RWPE1 (cell line): ENCODE measurements at regions of chr15 and their contacts with region 1.

Region 1: DNA sequence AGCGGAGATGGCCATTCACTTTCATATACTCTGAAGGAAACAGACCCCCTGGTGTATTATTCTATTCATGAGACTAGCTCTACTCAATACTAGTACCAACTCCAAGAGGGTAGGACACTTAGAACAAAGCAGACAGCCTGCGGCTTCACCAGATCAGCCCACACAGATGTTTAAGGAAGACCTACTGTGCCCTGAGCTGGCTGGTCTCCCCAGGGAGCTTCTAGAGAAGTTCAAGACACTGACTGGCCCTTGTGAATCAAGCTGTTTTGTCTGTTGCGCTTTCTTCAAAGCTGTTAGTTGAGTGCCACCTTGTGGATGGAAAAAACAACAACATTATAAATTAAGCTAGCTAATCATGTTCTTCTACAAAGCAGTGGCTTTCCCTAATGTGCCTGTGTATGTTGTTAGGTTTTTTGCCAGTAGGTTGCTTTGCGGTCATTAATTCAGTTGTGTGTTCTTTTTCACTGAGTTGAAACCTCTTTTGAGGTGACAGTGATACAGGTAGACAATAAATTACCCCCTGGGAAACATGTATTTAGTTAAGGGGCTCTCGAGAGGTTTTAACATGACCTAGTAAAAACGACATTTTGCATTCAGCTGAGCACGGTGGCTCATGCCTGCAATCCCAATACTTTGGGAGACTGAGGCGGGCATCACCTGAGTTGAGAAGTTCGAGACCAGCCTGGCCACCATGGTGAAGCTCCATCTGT is 64.2 kb upstream of the MYZAP start:
- DNase-seq: peak; percentile 70
- H3K27ac ChIP-seq: no peak overlapping the region
- CTCF ChIP-seq: peak; percentile 72

Region 2: DNA sequence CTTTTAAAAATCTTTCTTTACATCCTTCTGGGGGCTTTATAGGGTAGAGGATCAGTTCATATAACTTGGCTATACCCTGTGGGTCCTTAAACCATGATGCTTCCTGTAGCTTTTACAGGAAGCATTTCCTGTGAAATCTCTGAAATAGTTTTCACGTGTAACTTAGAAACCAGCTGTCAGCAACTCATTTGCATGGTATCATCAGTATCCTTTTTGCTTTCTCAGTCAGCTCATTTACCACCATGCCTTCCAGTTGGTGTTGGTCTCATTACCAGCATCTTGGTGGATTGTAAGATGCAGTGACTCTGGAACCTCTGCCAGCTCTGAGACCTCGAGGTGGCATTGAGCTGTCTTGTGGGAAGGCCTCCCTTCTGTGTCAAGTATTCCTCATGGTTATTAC is 32.5 kb before region 1 on chr15:
- CTCF ChIA-PET with region 1: no interaction called
- POLR2A ChIA-PET with region 1: no interaction called
- DNase-seq: no peak
- H3K27ac ChIP-seq: no peak overlapping the region
- CTCF ChIP-seq: no peak

Region 3: DNA sequence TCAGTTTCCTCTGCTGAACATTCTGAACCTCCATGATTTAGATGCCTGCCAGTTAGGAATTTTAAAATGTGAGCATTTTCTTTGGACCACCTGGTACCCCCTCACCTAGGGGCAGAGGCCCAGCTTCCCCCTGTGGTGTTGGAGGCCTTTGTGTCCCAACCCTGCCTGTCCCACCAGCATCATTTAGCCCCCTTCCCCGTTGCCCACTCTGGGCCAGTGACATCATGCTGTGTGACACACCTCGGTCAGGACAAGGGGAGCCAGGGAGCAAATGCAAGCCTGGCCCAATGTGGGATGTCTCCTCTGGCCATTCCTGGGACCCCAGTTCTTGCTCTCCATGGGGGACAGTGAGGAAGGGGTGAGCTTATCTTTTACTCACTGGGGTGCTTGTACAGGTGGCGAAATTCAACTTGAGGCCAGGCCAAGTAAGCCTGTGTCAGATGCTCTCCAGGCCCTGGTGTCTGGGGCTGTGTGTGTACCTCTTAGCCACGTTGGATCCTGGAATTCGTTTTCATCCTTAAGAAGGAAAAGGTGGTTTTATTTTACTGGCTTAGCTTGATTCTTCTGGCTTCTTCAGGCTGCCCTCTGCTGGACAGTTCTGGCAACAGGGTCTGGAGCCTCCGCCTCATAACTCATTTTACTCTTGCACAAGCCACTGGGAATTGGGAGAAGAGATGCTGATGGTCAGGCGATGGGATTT is 14.4 kb after region 1 on chr15:
- CTCF ChIA-PET with region 1: interaction called, 12 read pairs
- POLR2A ChIA-PET with region 1: interaction called, 4 read pairs
- DNase-seq: peak; percentile 59
- H3K27ac ChIP-seq: no peak overlapping the region
- CTCF ChIP-seq: peak; percentile 92